Endothelial cell of umbilical vein (primary cell): ENCODE measurements at regions of chr1 and their contacts with region 1.

Region 1: DNA sequence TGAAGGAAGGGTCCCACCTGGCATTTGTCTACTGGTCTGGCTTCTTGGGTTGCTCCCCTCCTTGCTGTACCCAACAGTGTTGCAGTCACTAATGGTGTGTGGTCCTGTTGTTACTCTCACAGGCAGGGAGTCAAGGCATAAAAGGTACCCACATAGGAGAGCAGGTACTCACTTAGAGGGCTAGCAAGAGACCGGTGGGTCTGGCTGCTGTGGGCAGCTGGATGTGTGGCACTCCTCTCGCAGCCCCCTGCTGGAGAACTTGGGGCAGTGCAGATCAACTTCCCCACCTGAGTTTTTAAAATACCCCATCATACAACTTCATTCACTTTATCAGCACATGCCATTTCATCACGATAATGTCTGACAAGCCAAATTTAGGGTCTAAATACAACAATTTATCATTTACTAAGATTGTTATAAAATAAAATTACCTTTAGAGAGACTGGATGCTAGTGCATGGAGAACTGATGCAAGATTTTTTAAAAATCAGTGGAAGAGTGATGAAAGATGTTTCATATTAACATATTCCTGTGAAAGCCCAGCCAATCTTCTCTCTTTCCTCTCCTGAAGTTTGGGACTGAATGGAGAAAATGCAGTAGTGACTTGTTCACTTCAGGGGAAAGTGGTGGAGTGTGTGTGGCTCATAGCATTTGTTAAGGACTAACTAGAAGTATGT is 42.8 kb downstream of the ACP6 start:
- DNase-seq: peak; percentile 48
- H3K4me3 ChIP-seq: no peak overlapping the region
- H3K27ac ChIP-seq: no peak overlapping the region
- H3K4me1 ChIP-seq: peaks cover 6% of the 10 kb centered on the region
- H3K27me3 ChIP-seq: no peaks in the 10 kb centered on the region
- CTCF ChIP-seq: peak; percentile 86 to 92
- POLR2A ChIP-seq: no peak

Region 2: GRCh38 chr1:147273409-147274336 is 353.9 kb before region 1 on chr1:
- CTCF ChIA-PET with region 1: interaction called, 17 read pairs
- POLR2A ChIA-PET with region 1: interaction called, 6 read pairs
- dilution Hi-C with region 1: no loop called
- intact Hi-C with region 1: loop called (anchors 1 kb)
- DNase-seq: peak; percentile 77
- H3K4me3 ChIP-seq: no peak overlapping the region
- H3K27ac ChIP-seq: peak overlapping the region; percentile 48
- H3K4me1 ChIP-seq: peaks cover 14% of the 10 kb centered on the region
- H3K27me3 ChIP-seq: no peaks in the 10 kb centered on the region
- CTCF ChIP-seq: peak; percentile 28 to 35
- POLR2A ChIP-seq: no peak

Region 3: DNA sequence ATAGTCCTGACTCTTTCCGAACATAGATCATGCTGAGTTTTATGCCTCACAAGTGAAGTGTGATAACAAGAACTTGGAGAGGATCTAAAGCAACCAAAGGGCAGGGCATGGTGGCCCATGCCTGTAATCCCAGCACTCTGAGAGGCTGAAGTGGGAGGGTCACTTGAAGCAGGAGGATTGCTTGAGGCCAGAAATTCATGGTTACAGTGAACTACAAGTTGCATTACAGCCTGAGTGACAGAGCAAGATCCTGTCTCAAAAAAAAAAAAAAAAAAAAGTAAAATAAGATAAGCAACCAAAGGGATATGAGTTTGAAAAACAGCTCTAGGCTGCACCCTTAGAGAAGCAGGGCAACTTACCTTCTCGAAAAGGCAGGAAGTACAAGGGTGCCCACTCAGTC is 104.8 kb before region 1 on chr1:
- CTCF ChIA-PET with region 1: no interaction called
- POLR2A ChIA-PET with region 1: no interaction called
- dilution Hi-C with region 1: no loop called
- intact Hi-C with region 1: no loop called
- DNase-seq: no peak
- H3K4me3 ChIP-seq: no peak overlapping the region
- H3K27ac ChIP-seq: no peak overlapping the region
- H3K4me1 ChIP-seq: no peaks in the 10 kb centered on the region
- H3K27me3 ChIP-seq: peaks cover 4 to 7% of the 10 kb centered on the region in 2 experiments
- CTCF ChIP-seq: no peak
- POLR2A ChIP-seq: no peak

Region 4: GRCh38 chr1:147599362-147600118 is 28.0 kb before region 1 on chr1:
- CTCF ChIA-PET with region 1: interaction called, 17 read pairs
- POLR2A ChIA-PET with region 1: no interaction called
- dilution Hi-C with region 1: no loop called
- intact Hi-C with region 1: loop called (anchors 1 kb)
- DNase-seq: peak; percentile 98
- H3K4me3 ChIP-seq: peak overlapping the region; percentile 76 to 91 (median 78)
- H3K27ac ChIP-seq: no peak overlapping the region
- H3K4me1 ChIP-seq: peaks cover 13% of the 10 kb centered on the region
- H3K27me3 ChIP-seq: peaks cover 3 to 4% of the 10 kb centered on the region in 2 experiments
- CTCF ChIP-seq: no peak
- POLR2A ChIP-seq: no peak

Region 5: GRCh38 chr1:147611021-147611426 is 16.5 kb before region 1 on chr1:
- CTCF ChIA-PET with region 1: interaction called, 12 read pairs
- POLR2A ChIA-PET with region 1: no interaction called
- dilution Hi-C with region 1: no loop called
- intact Hi-C with region 1: no loop called
- DNase-seq: no peak
- H3K4me3 ChIP-seq: no peak overlapping the region
- H3K27ac ChIP-seq: no peak overlapping the region
- H3K4me1 ChIP-seq: no peaks in the 10 kb centered on the region
- H3K27me3 ChIP-seq: no peaks in the 10 kb centered on the region
- CTCF ChIP-seq: no peak
- POLR2A ChIP-seq: no peak

Region 6: GRCh38 chr1:147640553-147641165 is 13.1 kb after region 1 on chr1:
- CTCF ChIA-PET with region 1: interaction called, 11 read pairs
- POLR2A ChIA-PET with region 1: no interaction called
- dilution Hi-C with region 1: no loop called
- intact Hi-C with region 1: loop called (anchors 1 kb)
- DNase-seq: peak; percentile 60
- H3K4me3 ChIP-seq: no peak overlapping the region
- H3K27ac ChIP-seq: no peak overlapping the region
- H3K4me1 ChIP-seq: no peaks in the 10 kb centered on the region
- H3K27me3 ChIP-seq: no peaks in the 10 kb centered on the region
- CTCF ChIP-seq: peak; percentile 94 to 96
- POLR2A ChIP-seq: no peak